Activated CD4-positive, alpha-beta T cell treated with anti-CD3 and anti-CD28 coated beads for 36 hours (primary cell): ENCODE measurements at regions of chr12 and their contacts with region 1.

Region 1: GRCh38 chr12:18250313-18250916 is 10.9 kb upstream of the PIK3C2G start:
- DNase-seq: no peak
- ATAC-seq: no peak
- H3K4me3 Mint-ChIP-seq: no peak overlapping the region
- H3K27ac Mint-ChIP-seq: no peak overlapping the region
- H3K4me1 Mint-ChIP-seq: no peaks in the 10 kb centered on the region
- H3K27me3 Mint-ChIP-seq: no peaks in the 10 kb centered on the region

Region 2: GRCh38 chr12:18139989-18140596 is 110.3 kb before region 1 on chr12:
- CTCF ChIA-PET with region 1: no interaction called
- POLR2A ChIA-PET with region 1: no interaction called
- intact Hi-C with region 1: loop called in 1 of 2 experiments (anchors 5 kb)
- DNase-seq: no peak
- ATAC-seq: no peak
- H3K4me3 Mint-ChIP-seq: no peak overlapping the region
- H3K27ac Mint-ChIP-seq: no peak overlapping the region
- H3K4me1 Mint-ChIP-seq: no peaks in the 10 kb centered on the region
- H3K27me3 Mint-ChIP-seq: no peaks in the 10 kb centered on the region